WTC11 (cell line): ENCODE measurements at regions of chr7 and their contacts with region 1.

Region 1: DNA sequence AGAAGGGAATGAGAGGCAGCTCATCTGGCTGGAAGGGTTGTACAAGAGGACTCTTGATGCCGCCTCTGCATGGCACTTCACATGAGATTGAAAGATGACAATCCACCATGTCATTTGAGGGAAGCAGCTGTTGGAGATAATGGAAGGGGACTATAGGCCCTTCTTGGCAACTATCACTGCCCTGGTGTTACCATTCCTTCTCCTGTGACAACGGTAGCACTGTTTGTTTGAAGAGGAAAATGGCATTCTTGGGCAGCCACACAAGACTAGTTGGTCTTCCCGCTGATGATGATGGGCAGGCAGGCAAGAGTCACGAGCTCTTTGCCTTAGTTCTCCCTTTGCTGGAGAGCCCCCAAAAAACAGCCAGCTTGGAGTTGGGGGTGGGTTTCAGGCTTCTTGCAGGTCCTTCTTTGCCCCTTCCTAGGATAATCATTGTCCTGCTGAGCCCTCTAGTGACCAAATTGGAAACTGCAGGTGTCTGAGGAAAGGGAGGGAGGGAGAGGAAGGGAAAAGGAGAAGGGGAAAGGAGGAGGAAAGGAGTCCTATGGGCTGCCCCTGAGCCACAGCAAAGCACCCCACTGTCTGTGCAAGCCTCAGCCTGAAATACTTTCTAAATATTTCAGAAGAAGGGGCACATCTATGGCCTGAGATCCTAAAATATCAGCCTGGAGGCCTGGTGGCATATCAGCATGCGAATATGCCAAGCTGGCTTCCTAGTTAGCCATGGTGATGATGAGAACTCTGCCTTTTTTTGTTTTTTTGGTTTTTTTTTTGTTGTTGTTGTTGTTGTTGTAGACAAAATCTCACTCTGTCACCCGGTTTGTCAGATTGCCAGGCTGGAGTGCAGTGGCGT is 165.6 kb upstream of the KMT2E start:
- DNase-seq: peak; percentile 84
- ATAC-seq: peak; percentile 94
- H3K4me3 Mint-ChIP-seq: no peak overlapping the region
- H3K27ac Mint-ChIP-seq: no peak overlapping the region
- H3K4me1 Mint-ChIP-seq: no peaks in the 10 kb centered on the region
- H3K27me3 Mint-ChIP-seq: no peaks in the 10 kb centered on the region
- CTCF ChIP-seq: peak; percentile 96

Region 2: GRCh38 chr7:104767826-104768536 is 80.4 kb before region 1 on chr7:
- CTCF ChIA-PET with region 1: interaction called, 18 read pairs
- POLR2A ChIA-PET with region 1: no interaction called
- DNase-seq: no peak
- ATAC-seq: no peak
- H3K4me3 Mint-ChIP-seq: no peak overlapping the region
- H3K27ac Mint-ChIP-seq: no peak overlapping the region
- H3K4me1 Mint-ChIP-seq: peaks cover 15% of the 10 kb centered on the region
- H3K27me3 Mint-ChIP-seq: no peaks in the 10 kb centered on the region; the same call in 1 of the 2 replicates
- CTCF ChIP-seq: no peak